ENCODE measurements at regions of chrX and their contacts with region 1.

Region 1: GRCh38 chrX:13699183-13699826 is 10.4 kb downstream of the RAB9A start:
- DNase-seq: peak; percentile 17
- ATAC-seq: peak; percentile 40
- H3K4me3 ChIP-seq: peak overlapping the region in 1 of 5 experiments; percentile 11
- H3K4me3 Mint-ChIP-seq: peak overlapping the region; percentile 70
- H3K27ac ChIP-seq: peak overlapping the region in 1 of 2 donors; percentile 10
- H3K27ac Mint-ChIP-seq: peak overlapping the region; percentile 86
- H3K4me1 ChIP-seq: peaks cover 49 to 67% of the 10 kb centered on the region in 2 donors
- H3K4me1 Mint-ChIP-seq: peaks cover 75% of the 10 kb centered on the region
- H3K27me3 ChIP-seq: no peaks in the 10 kb centered on the region
- H3K27me3 Mint-ChIP-seq: no peaks in the 10 kb centered on the region
- CTCF ChIP-seq: no peak

Region 2: GRCh38 chrX:13520936-13521335 is 178.4 kb before region 1 on chrX:
- CTCF ChIA-PET with region 1: no interaction called
- POLR2A ChIA-PET with region 1: no interaction called
- intact Hi-C with region 1: no loop called
- DNase-seq: no peak
- ATAC-seq: no peak
- H3K4me3 ChIP-seq: no peak overlapping the region
- H3K4me3 Mint-ChIP-seq: no peak overlapping the region
- H3K27ac ChIP-seq: no peak overlapping the region
- H3K27ac Mint-ChIP-seq: no peak overlapping the region
- H3K4me1 ChIP-seq: no peaks in the 10 kb centered on the region
- H3K4me1 Mint-ChIP-seq: no peaks in the 10 kb centered on the region
- H3K27me3 ChIP-seq: peaks cover 0 to 5% (median 0%) of the 10 kb centered on the region in 4 experiments
- H3K27me3 Mint-ChIP-seq: peaks cover 7% of the 10 kb centered on the region
- CTCF ChIP-seq: no peak

Region 3: DNA sequence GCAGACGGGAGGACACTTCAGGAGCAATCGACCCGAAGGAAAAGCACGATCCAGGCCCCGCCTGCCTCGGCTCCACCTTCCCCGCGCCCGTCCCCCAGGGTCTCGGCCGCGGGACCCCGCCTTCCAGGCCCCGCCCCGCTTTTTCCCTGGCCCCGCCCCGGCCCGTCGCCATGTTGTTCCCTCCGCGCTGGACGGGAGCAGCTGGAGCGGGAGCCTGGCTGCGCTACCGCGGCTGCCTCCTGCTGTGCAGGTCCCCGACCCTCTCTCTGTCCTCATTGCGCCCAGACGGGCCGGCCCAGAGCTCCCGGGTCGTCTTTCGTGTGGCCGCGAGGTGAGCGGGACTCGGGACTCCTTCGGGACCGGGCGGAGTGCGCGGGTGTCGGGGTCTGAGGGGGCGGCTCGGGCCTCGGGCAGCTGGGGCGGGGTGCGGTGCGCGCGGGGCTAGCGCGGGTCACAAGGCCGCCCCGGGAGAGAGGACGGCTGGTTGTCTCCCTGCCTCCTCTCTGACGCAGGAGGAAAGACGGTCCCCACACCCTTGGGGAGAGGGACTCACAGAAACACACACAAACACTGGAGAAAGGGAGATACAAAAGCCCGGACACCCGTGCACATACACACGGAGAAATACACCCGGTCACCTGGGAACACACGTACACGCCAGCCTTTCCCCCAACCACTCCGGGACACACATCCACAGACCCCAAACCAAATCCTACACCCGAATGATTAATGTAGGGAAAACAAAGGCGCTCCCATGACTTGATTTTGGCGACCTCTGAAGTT is 10.2 kb before region 1 on chrX and contains the start of gene RAB9A:
- CTCF ChIA-PET with region 1: interaction called, 5 read pairs
- POLR2A ChIA-PET with region 1: no interaction called
- intact Hi-C with region 1: loop called (anchors 1 kb)
- DNase-seq: peak; percentile 79
- ATAC-seq: peak; percentile 91
- H3K4me3 ChIP-seq: peak within 1 kb of the TSS; percentile 61 to 89 (median 78)
- H3K4me3 Mint-ChIP-seq: peak within 1 kb of the TSS; percentile 93
- H3K27ac ChIP-seq: peak within 1 kb of the TSS; percentile 70 to 85
- H3K27ac Mint-ChIP-seq: peak within 1 kb of the TSS; percentile 91
- H3K4me1 ChIP-seq: peaks cover 41 to 43% of the 10 kb centered on the region in 2 donors
- H3K4me1 Mint-ChIP-seq: peaks cover 53% of the 10 kb centered on the region
- H3K27me3 ChIP-seq: no peaks in the 10 kb centered on the region
- H3K27me3 Mint-ChIP-seq: no peaks in the 10 kb centered on the region
- CTCF ChIP-seq: no peak
- total RNA-seq, gene RAB9A: 16.7 and 17.1 TPM in 2 replicates

Region 4: GRCh38 chrX:13855689-13856450 is 156.6 kb after region 1 on chrX:
- CTCF ChIA-PET with region 1: no interaction called
- POLR2A ChIA-PET with region 1: no interaction called
- intact Hi-C with region 1: no loop called
- DNase-seq: no peak
- ATAC-seq: no peak
- H3K4me3 ChIP-seq: no peak overlapping the region
- H3K4me3 Mint-ChIP-seq: no peak overlapping the region
- H3K27ac ChIP-seq: no peak overlapping the region
- H3K27ac Mint-ChIP-seq: no peak overlapping the region
- H3K4me1 ChIP-seq: no peaks in the 10 kb centered on the region
- H3K4me1 Mint-ChIP-seq: peaks cover 3% of the 10 kb centered on the region
- H3K27me3 ChIP-seq: peaks cover 0 to 5% (median 0%) of the 10 kb centered on the region in 4 experiments
- H3K27me3 Mint-ChIP-seq: peaks cover 13% of the 10 kb centered on the region
- CTCF ChIP-seq: no peak